ENCODE measurements at regions of chr19 and their contacts with region 1.

Region 1: GRCh38 chr19:44002566-44003460 is at the start of gene ZNF230:
- DNase-seq: peak; percentile 81
- H3K4me3 Mint-ChIP-seq: peak within 1 kb of the TSS; percentile 100
- H3K27ac Mint-ChIP-seq: peak within 1 kb of the TSS; percentile 97
- H3K4me1 Mint-ChIP-seq: peaks cover 15% of the 10 kb centered on the region
- H3K27me3 Mint-ChIP-seq: no peaks in the 10 kb centered on the region
- total RNA-seq, gene ZNF230: 3.8 and 4.5 TPM in 2 replicates

Region 2: GRCh38 chr19:43934985-43935708 is 67.7 kb before region 1 on chr19 and contains the start of gene ZNF45:
- intact Hi-C with region 1: loop called (anchors 1 kb)
- DNase-seq: peak; percentile 78
- H3K4me3 Mint-ChIP-seq: peak within 1 kb of the TSS; percentile 97
- H3K27ac Mint-ChIP-seq: peak within 1 kb of the TSS; percentile 90
- H3K4me1 Mint-ChIP-seq: peaks cover 10% of the 10 kb centered on the region
- H3K27me3 Mint-ChIP-seq: no peaks in the 10 kb centered on the region
- total RNA-seq, gene ZNF45: 11.1 and 12.2 TPM in 2 replicates

Region 3: DNA sequence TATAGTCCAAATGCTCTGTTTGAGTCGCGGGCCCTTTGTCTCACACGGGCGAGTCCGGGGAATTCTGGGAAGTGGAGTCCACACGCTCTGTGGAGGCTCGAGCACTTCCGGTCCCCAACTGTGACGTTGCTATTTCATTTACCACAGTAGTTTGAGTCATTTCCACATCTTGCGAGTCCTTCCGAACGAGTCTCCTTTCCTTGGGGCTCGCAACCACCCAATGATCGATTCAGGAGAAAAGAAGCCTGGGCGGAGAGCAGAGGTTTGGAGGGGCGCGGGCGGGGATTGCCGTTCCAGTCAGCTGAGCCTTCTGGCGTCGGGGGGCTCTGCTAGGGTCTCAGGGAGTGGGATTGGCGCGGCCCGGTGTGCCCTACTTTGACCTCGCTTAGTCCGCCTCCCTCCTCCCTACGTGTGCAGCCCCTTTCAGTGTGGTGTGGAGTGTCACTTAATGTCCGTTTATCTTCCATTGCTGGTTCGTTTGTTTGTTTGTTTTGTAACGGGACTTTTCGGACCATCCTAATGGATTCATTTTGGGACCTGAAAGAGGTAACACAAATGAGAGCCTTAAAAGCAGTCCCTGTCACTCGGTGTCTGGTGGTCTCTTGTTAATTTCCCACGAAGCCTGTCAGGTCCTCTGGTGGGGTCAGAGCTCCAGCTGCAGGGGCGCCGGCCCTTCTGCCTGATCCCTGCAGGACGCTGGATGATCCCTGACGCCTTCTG is 22.6 kb after region 1 on chr19 and contains the start of gene ZNF222:
- intact Hi-C with region 1: loop called (anchors 1 kb)
- DNase-seq: peak; percentile 74
- H3K4me3 Mint-ChIP-seq: peak within 1 kb of the TSS; percentile 95
- H3K27ac Mint-ChIP-seq: peak within 1 kb of the TSS; percentile 70
- H3K4me1 Mint-ChIP-seq: peaks cover 15% of the 10 kb centered on the region
- H3K27me3 Mint-ChIP-seq: no peaks in the 10 kb centered on the region
- total RNA-seq, gene ZNF222: 0.99 and 1.8 TPM in 2 replicates

Region 4: DNA sequence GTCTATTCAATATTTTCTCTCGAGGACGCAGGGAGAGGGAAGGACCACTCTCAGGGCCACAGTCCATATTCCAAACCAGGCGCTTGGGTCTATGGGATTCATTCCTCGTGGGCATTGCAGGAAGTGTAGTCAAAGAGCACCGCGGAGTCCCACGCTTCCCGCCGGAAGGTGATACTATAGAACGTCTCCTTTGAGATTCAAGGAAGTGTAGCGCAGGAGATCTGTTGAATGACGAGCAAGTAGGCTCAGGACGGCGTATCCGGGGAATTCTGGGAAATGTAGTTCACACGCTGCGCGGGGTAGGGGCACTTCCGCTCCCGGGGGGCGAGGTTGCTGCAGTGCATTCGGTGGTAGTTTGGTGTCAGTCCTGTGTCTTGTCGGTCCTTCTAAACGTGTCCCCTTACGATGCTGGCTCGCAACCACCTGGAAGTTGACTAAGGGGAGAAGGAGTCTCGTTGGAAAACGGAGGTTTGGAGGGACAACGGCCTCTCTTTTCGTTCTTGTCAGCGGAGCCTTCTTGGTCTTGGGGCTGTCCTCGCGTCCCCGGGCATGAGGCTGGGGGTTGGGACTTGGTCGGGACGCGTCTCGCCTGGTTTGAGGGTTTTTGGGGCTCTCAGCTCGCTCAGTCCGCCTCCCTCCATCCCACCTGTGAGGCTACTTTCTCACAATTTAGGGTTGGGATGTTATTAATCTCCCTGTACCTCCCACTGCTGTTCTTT is 69.2 kb after region 1 on chr19 and contains the start of gene ZNF284:
- intact Hi-C with region 1: loop called (anchors 2 kb)
- DNase-seq: peak; percentile 77
- H3K4me3 Mint-ChIP-seq: peak within 1 kb of the TSS; percentile 85
- H3K27ac Mint-ChIP-seq: peak within 1 kb of the TSS; percentile 50
- H3K4me1 Mint-ChIP-seq: peaks cover 17% of the 10 kb centered on the region
- H3K27me3 Mint-ChIP-seq: no peaks in the 10 kb centered on the region
- total RNA-seq, gene ZNF284: 1.1 and 1.4 TPM in 2 replicates

Region 5: DNA sequence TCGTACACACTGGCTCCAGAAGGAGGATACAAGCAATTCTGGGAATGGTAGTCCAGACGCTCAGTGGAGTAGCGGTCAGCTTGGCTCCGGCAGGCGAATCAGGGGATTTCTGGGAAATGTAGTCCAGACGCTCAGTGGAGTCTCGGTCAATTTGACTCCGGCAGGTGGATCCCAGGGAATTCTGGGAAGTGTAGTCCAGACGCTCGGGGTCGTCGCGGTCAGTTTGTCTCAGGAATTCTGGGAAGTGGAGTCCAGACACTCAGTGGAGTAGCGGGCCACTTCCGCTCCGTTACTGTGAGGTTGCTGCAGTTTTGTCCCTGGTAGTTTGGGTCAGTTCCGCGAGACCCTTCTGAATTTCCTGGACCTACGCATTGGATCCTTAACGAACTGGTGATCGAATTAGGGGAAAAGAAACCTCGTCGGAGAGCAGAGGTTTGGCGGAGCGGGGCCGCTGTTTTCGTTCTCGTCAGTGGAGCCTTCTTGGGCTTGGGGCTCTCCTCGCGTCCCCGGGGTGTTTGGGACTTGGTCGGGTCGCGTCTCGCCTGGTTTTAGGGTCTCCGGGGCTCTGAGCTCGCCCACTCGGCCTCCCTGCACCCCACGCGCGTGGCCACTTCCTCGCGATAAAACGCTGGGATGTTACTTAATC is 110.4 kb after region 1 on chr19 and contains the start of gene ZNF225:
- intact Hi-C with region 1: loop called (anchors 1 kb)
- DNase-seq: peak; percentile 81
- H3K4me3 Mint-ChIP-seq: peak within 1 kb of the TSS; percentile 99
- H3K27ac Mint-ChIP-seq: peak within 1 kb of the TSS; percentile 82
- H3K4me1 Mint-ChIP-seq: peaks cover 14% of the 10 kb centered on the region
- H3K27me3 Mint-ChIP-seq: no peaks in the 10 kb centered on the region
- total RNA-seq, gene ZNF225: 3.5 and 3.6 TPM in 2 replicates

Region 6: GRCh38 chr19:44212250-44212865 is 209.5 kb after region 1 on chr19 and contains the start of gene ZNF227:
- intact Hi-C with region 1: loop called (anchors 1 kb)
- DNase-seq: peak; percentile 70
- H3K4me3 Mint-ChIP-seq: peak within 1 kb of the TSS; percentile 92
- H3K27ac Mint-ChIP-seq: peak within 1 kb of the TSS; percentile 85
- H3K4me1 Mint-ChIP-seq: peaks cover 16% of the 10 kb centered on the region
- H3K27me3 Mint-ChIP-seq: no peaks in the 10 kb centered on the region
- total RNA-seq, gene ZNF227: 17.6 and 17.7 TPM in 2 replicates

Measured in activated T-helper 2 cell treated with anti-CD3 and anti-CD28 coated beads, Interferon-gamma antibody, Interleukin-2, Interleukin-4, amounts not matched to agents 10 μg/mL and 5 μg/mL and 100 μg/mL, durations not matched to agents 14 hours and 24 hours and 36 hours (primary cell).